Endothelial cell of umbilical vein (primary cell): ENCODE measurements at regions of chr3 and their contacts with region 1.

Region 1: DNA sequence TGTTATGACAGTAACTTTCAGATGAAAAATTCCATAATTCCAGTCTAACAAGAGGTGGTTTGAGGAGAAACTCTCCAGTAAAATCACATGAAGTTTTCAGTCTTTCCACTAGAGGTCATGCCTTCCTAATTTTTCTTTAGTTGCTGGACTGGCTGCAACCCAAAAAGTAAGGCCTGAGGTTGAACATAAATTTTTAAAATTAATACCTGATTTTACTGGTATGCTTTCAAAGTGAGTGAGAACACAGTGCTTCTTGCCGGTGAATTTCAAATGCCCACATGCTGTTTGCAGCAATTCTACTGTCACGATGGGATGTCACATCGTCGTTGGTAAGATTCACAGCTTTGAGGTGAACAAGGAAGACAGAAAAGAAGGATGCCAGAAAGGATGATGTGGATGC is 89.0 kb upstream of the FGF12 start:
- DNase-seq: peak; percentile 68
- H3K4me3 ChIP-seq: no peak overlapping the region
- H3K27ac ChIP-seq: no peak overlapping the region
- H3K4me1 ChIP-seq: peaks cover 29% of the 10 kb centered on the region
- H3K27me3 ChIP-seq: no peaks in the 10 kb centered on the region
- CTCF ChIP-seq: peak; percentile 38 to 51
- POLR2A ChIP-seq: no peak

Region 2: GRCh38 chr3:192887047-192887446 is 70.7 kb after region 1 on chr3:
- CTCF ChIA-PET with region 1: interaction called, 10 read pairs
- POLR2A ChIA-PET with region 1: no interaction called
- dilution Hi-C with region 1: no loop called
- intact Hi-C with region 1: loop called (anchors 1 kb)
- DNase-seq: peak; percentile 58
- H3K4me3 ChIP-seq: peak overlapping the region in 1 of 3 experiments; percentile 30
- H3K27ac ChIP-seq: peak overlapping the region; percentile 91
- H3K4me1 ChIP-seq: peaks cover 73% of the 10 kb centered on the region
- H3K27me3 ChIP-seq: no peaks in the 10 kb centered on the region
- CTCF ChIP-seq: no peak
- POLR2A ChIP-seq: no peak

Region 3: DNA sequence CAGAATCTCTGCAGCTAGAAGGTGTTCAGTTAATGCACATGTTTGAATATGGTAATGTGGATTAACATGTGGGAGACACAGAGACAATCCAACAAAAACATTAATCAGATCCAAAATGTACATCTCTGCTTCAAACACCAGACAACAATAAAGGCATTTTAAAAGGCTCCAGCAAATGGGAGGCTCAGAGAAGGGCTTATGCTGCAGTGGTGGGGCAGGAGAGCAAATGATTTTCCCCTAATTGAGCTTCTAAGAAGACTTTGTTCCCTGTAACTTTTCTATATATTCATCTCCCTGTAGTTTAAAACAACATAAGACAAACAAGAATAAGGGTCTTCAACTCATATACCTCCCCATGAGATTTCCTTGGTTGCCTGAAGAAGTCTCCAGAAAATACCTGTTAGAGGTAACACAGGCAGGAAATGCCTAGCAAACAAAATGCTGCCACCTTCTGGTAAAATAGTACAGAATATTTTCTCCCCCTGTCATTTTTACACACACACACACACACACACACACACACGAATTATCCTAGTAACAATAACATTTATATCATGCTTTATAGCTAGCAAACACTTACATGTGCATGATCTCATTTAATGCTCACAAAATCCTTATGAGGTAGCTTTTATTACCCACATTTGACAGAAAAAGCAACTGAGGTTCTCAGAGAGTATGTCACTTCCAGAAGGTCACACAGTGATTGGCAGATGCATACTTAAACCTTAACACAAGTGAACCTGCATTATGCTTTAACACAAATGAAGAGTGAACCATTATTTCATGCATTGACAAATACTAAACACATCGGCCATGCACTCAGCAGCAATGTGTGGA is 224.7 kb after region 1 on chr3:
- CTCF ChIA-PET with region 1: interaction called, 273 read pairs
- POLR2A ChIA-PET with region 1: no interaction called
- dilution Hi-C with region 1: no loop called
- intact Hi-C with region 1: loop called (anchors 1 kb)
- DNase-seq: peak; percentile 43
- H3K4me3 ChIP-seq: no peak overlapping the region
- H3K27ac ChIP-seq: no peak overlapping the region
- H3K4me1 ChIP-seq: no peaks in the 10 kb centered on the region
- H3K27me3 ChIP-seq: no peaks in the 10 kb centered on the region
- CTCF ChIP-seq: peak; percentile 15
- POLR2A ChIP-seq: no peak

Region 4: DNA sequence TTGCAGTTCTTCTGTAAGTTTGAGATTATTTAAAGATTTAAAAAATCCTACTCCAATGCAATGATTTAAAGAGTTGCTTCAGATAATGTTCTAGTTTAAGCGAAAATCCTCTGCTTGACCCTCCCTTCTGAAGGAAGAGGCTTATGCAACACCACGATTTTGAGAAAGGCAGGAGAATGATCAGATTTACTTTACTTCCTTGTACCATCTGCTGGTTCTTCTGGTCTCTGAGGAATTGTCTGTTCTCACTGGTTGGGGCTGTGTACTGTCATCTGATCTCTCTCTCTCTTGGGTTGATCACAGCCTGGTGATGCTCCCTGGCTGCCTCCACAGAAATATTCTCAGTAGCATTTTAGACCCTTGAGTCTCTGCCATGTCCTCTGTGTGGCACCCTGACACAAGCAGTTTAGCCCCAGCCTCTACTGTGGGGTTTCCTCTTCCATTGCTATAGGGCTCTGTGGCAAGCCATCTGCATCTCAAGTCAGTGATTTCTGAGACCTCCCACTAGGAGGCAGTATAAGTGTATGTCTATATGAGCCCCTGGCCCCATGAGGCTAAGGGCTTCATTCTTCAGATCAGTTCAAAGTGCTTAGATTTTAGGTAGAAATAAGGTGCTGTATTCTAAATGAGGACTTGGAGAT is 373.9 kb after region 1 on chr3:
- CTCF ChIA-PET with region 1: interaction called, 11 read pairs
- POLR2A ChIA-PET with region 1: no interaction called
- dilution Hi-C with region 1: no loop called
- intact Hi-C with region 1: loop called (anchors 1 kb)
- DNase-seq: peak; percentile 56
- H3K4me3 ChIP-seq: no peak overlapping the region
- H3K27ac ChIP-seq: no peak overlapping the region
- H3K4me1 ChIP-seq: no peaks in the 10 kb centered on the region
- H3K27me3 ChIP-seq: peaks cover 0 to 9% of the 10 kb centered on the region in 2 experiments
- CTCF ChIP-seq: peak; percentile 45 to 59
- POLR2A ChIP-seq: no peak

Region 5: GRCh38 chr3:193564012-193564411 is 747.7 kb after region 1 on chr3:
- CTCF ChIA-PET with region 1: interaction called, 188 read pairs
- POLR2A ChIA-PET with region 1: no interaction called
- dilution Hi-C with region 1: no loop called
- intact Hi-C with region 1: no loop called
- DNase-seq: no peak
- H3K4me3 ChIP-seq: no peak overlapping the region
- H3K27ac ChIP-seq: no peak overlapping the region
- H3K4me1 ChIP-seq: no peaks in the 10 kb centered on the region
- H3K27me3 ChIP-seq: peaks cover 0 to 1% of the 10 kb centered on the region in 2 experiments
- CTCF ChIP-seq: peak; percentile 10 to 11
- POLR2A ChIP-seq: no peak